ENCODE measurements at regions of chr17 and their contacts with region 1.

Region 1: DNA sequence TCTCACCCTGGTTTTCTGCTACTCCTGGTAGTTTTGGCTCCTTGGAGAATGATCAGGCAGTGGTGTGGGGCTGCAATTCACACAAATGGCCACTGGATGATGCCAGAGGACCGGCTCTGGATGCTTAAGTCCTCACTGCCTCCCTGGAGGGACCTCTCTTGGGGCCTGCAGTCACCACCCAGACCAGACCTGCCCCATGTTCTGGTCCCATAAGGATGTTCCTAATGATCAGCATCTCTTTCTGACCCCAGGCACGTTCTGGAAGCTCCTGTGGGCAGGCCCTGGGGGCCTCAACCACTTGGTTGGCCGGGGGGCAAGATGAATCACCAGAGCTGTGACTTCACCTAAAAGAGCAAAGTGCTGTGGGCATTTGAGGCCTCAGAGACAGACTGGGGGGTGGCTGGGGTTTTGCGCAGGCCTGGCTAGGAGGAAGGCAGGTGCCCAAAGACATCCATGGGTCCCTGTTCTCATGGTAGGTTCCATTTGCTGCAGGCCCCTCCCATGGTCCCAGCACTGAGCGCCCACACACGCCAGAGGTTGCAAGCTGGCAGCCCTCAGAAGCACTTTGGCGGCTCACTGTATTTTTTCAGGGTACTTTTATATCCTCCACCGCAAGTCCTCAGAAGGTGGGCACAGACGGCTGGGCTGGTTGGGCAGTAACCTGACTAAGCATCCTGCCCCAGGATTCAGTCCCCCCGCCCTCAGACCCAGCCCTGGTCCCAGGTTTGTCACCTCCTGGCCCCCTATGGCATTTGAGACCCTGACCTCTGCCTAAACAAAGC is 53.2 kb downstream of the NT5M start:
- DNase-seq: peak; percentile 73 to 83 (median 74)
- ATAC-seq: peak; percentile 61 to 78 (median 70)
- H3K4me3 ChIP-seq: no peak overlapping the region
- H3K27ac ChIP-seq: no peak overlapping the region
- H3K4me1 ChIP-seq: peaks cover 0 to 27% (median 12%) of the 10 kb centered on the region in 12 donors
- H3K27me3 ChIP-seq: no peaks in the 10 kb centered on the region
- CTCF ChIP-seq: peak; percentile 94 to 100 (median 98)
- POLR2A ChIP-seq: no peak

Region 2: DNA sequence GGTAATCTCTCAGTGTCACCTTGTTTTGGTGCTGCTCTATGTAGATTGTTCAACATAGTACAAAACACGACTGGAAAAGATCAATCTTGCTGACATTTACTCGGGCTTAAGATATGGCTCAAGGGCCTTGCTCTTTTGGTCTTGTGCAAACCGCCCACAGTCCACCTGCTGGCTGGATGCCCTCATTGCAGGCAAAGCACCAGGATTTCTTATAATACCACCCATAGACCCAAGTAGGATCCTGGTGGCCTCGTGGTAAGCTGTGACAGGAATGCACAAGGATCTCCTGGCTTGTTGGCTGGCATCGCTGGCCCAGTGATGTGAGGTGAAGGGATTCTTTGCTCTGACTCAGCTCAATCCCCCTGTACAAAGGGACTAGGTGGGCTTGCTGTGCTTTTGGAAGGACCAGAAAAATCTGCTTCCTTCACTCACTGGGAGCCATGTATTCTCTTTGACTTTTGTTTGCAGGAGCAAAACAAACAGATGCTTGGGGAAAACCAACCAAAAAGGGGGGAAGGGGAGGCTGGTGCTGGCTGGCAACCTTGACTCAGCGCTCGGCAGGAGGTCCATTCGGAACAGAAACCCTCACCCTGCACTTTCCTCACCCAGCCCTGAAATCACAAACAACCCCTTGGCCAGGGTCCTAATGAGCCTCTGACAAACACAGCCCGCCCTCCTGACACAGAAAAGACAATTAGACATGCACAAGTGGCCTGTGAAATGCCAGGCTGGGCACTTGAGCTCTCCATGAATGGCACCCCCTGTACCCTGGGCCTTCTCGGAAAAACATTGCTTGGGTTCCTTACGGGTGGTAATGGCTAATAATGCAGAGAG is 83.9 kb after region 1 on chr17:
- intact Hi-C with region 1: loop called in 3 of 10 experiments (anchors 1 to 10 kb)
- DNase-seq: peak in 4 of 5 donors; percentile 39 to 81 (median 48)
- ATAC-seq: peak; percentile 10 to 69 (median 51)
- H3K4me3 ChIP-seq: no peak overlapping the region
- H3K27ac ChIP-seq: no peak overlapping the region
- H3K4me1 ChIP-seq: peaks cover 0 to 9% (median 0%) of the 10 kb centered on the region in 12 donors
- H3K27me3 ChIP-seq: no peaks in the 10 kb centered on the region
- CTCF ChIP-seq: peak; percentile 40 to 67 (median 50)
- POLR2A ChIP-seq: no peak

Region 3: GRCh38 chr17:17496189-17497064 is 140.1 kb after region 1 on chr17 and contains the start of gene RASD1:
- intact Hi-C with region 1: loop called (anchors 1 to 10 kb)
- DNase-seq: peak; percentile 92 to 97 (median 94)
- ATAC-seq: peak; percentile 72 to 92 (median 90)
- H3K4me3 ChIP-seq: peak within 1 kb of the TSS; percentile 49 to 81 (median 68)
- H3K27ac ChIP-seq: peak within 1 kb of the TSS; percentile 78 to 98 (median 91)
- H3K4me1 ChIP-seq: peaks cover 0 to 51% (median 23%) of the 10 kb centered on the region in 12 donors
- H3K27me3 ChIP-seq: peaks cover 0 to 7% (median 0%) of the 10 kb centered on the region in 9 donors
- CTCF ChIP-seq: peak; percentile 91 to 99 (median 98)
- POLR2A ChIP-seq: peak; percentile 98 to 100
- total RNA-seq, gene RASD1: 1.5 to 43.5 (median 16.2) TPM

Region 4: GRCh38 chr17:17613708-17614114 is 257.4 kb after region 1 on chr17:
- intact Hi-C with region 1: loop called in 3 of 10 experiments (anchors 10 kb)
- DNase-seq: peak in 4 of 5 donors; percentile 40 to 52 (median 44)
- ATAC-seq: peak; percentile 78 to 96 (median 92)
- H3K4me3 ChIP-seq: no peak overlapping the region
- H3K27ac ChIP-seq: no peak overlapping the region
- H3K4me1 ChIP-seq: peaks cover 0 to 10% (median 1%) of the 10 kb centered on the region in 12 donors
- H3K27me3 ChIP-seq: no peaks in the 10 kb centered on the region
- CTCF ChIP-seq: peak; percentile 51 to 77 (median 64)
- POLR2A ChIP-seq: no peak

Region 5: GRCh38 chr17:18038861-18039534 is 682.7 kb after region 1 on chr17 and contains the starts of genes ATPAF2 and GID4:
- intact Hi-C with region 1: loop called in 1 of 10 experiments (anchors 10 kb)
- DNase-seq: peak; percentile 99 to 100 (median 100)
- ATAC-seq: peak; percentile 97 to 99 (median 97)
- H3K4me3 ChIP-seq: peak within 1 kb of the TSS; percentile 72 to 95 (median 88)
- H3K27ac ChIP-seq: peak within 1 kb of the TSS; percentile 68 to 89 (median 75)
- H3K4me1 ChIP-seq: peaks cover 0 to 57% (median 32%) of the 10 kb centered on the region in 12 donors
- H3K27me3 ChIP-seq: no peaks in the 10 kb centered on the region
- CTCF ChIP-seq: no peak
- POLR2A ChIP-seq: peak in 1 of 2 donors; percentile 47
- total RNA-seq, gene ATPAF2: 25.6 to 46.2 (median 37.6) TPM
- total RNA-seq, gene GID4: 15.3 to 27.7 (median 18.2) TPM